ENCODE measurements at regions of chr3 and their contacts with region 1.

Region 1: GRCh38 chr3:56342475-56342874 is 125.8 kb downstream of the ERC2 start:
- DNase-seq: no peak
- H3K4me3 ChIP-seq: no peak overlapping the region
- H3K27ac ChIP-seq: no peak overlapping the region
- H3K4me1 ChIP-seq: no peaks in the 10 kb centered on the region
- H3K27me3 ChIP-seq: no peaks in the 10 kb centered on the region
- CTCF ChIP-seq: no peak

Region 2: DNA sequence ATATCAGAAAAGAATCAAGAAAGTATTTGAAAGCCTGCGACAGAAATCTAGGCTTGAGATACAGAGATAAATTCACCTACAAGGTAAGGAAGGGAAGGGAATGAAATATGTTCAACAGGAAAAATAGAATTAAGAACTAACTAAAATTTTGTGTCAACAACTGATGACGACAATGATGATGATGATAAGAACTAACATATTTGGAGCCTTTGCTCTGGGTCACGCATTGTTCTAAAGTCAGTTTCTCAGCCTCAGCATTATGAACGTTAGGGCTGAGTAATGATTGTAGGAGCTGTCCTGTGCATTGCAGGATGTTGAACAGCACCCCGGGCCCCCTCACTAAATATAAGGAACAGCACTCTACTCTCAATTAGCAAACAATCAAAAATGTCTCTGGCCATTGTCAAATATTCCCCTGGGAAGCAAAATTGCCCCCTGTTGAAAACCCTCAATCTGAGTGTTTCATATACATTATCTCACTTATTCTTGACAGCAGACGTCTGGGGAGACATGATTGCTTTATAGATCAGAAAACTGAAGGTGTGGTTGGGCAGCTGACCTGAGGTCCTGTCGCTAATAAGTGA is 37.3 kb after region 1 on chr3:
- CTCF ChIA-PET with region 1: no interaction called
- POLR2A ChIA-PET with region 1: no interaction called
- intact Hi-C with region 1: no loop called
- DNase-seq: no peak
- H3K4me3 ChIP-seq: no peak overlapping the region
- H3K27ac ChIP-seq: no peak overlapping the region
- H3K4me1 ChIP-seq: no peaks in the 10 kb centered on the region
- H3K27me3 ChIP-seq: peaks cover 21% of the 10 kb centered on the region
- CTCF ChIP-seq: no peak

Region 3: GRCh38 chr3:56443372-56443771 is 100.9 kb after region 1 on chr3:
- CTCF ChIA-PET with region 1: no interaction called
- POLR2A ChIA-PET with region 1: no interaction called
- intact Hi-C with region 1: loop called (anchors 1 kb)
- DNase-seq: no peak
- H3K4me3 ChIP-seq: no peak overlapping the region
- H3K27ac ChIP-seq: no peak overlapping the region
- H3K4me1 ChIP-seq: no peaks in the 10 kb centered on the region
- H3K27me3 ChIP-seq: peaks cover 8% of the 10 kb centered on the region; the same call in 1 of the 2 replicates
- CTCF ChIP-seq: no peak

Region 4: GRCh38 chr3:56494686-56495322 is 152.3 kb after region 1 on chr3:
- CTCF ChIA-PET with region 1: no interaction called
- POLR2A ChIA-PET with region 1: no interaction called
- intact Hi-C with region 1: loop called (anchors 2 kb)
- DNase-seq: peak; percentile 55 to 57
- H3K4me3 ChIP-seq: no peak overlapping the region
- H3K27ac ChIP-seq: no peak overlapping the region
- H3K4me1 ChIP-seq: no peaks in the 10 kb centered on the region
- H3K27me3 ChIP-seq: peaks cover 32% of the 10 kb centered on the region
- CTCF ChIP-seq: peak; percentile 88

Region 5: GRCh38 chr3:56667973-56668579 is 325.6 kb after region 1 on chr3:
- CTCF ChIA-PET with region 1: interaction called, 15 read pairs
- POLR2A ChIA-PET with region 1: no interaction called
- intact Hi-C with region 1: no loop called
- DNase-seq: no peak
- H3K4me3 ChIP-seq: no peak overlapping the region
- H3K27ac ChIP-seq: no peak overlapping the region
- H3K4me1 ChIP-seq: no peaks in the 10 kb centered on the region
- H3K27me3 ChIP-seq: no peaks in the 10 kb centered on the region
- CTCF ChIP-seq: no peak